ENCODE measurements at regions of chr1 and their contacts with region 1.

Region 1: DNA sequence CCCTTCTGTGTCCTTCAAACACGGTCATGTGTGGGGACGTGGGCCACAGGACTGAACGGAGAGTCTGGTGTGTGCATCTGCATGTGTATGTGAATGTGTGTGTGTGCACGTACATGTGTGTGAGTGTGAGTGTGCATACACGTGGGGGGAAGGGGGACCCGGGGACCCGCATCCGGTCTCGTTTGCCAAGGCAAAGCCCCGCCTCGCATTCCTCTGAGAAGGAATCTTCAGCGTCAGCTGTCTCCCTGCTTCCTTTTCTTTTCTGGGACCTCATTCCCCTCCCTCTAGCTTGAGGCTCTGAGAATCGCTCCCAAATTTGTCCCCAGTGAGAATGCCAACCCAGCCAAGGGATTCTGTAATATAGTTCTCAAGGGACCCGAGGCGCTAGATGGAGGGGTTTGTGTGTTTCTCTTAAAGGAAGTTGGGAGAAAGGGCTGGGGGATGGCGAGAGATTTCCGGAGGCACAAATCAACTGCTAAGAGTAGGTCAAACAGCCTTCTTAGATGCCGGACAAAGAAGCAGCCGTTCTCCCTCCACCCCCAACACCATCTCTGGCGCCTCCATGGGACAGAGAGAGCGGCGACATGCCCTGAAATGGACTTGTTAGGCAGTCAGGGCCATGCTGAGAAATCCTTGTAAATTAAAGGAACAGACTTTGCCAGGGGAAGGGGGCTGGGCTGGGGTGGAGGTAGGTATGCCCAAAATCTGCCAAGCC is 6.6 kb downstream of the IFFO2 start:
- DNase-seq: no peak

Region 2: DNA sequence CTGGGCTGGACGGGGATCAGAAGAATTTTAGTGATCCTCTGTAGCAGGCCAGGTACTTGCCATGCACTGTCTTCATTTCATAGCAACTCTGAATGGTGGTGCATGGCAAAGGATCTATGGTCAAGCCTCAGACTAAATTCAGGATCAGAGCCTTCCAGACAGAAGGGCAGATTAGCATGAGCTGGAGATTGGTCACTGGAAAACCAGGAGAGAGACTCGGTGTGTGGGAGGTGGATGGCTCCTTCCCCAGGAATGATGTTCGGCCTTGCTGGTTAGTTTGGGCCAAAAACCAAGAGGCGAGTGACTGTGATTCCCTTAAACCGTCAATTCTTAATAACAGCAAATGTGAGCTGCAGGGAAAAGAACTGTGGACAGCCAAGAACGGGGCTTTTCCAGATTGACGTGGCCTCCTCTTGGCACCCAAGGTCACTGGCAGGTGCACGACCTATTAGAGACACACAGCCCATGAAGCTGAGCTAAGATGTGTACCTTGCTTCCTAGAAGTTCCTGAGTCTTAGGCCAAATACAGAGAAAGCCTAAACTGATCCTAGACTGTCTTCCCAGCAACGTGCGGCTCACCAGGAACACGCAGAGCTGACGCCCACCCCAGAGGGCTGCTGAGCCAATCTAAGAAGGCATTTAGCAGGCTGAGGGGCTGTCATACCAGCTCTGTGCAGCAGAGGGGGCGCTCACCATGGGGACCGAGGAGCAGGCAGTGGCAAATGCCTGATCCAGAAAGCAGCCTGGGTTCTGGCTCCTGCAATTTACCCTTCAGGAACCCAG is 66.0 kb before region 1 on chr1:
- intact Hi-C with region 1: no loop called
- DNase-seq: no peak

Region 3: GRCh38 chr1:18913065-18913835 is 36.6 kb before region 1 on chr1:
- intact Hi-C with region 1: loop called (anchors 5 kb)
- DNase-seq: peak; percentile 92

Region 4: GRCh38 chr1:18926315-18927081 is 23.3 kb before region 1 on chr1:
- intact Hi-C with region 1: loop called (anchors 2 kb)
- DNase-seq: peak; percentile 85

Region 5: DNA sequence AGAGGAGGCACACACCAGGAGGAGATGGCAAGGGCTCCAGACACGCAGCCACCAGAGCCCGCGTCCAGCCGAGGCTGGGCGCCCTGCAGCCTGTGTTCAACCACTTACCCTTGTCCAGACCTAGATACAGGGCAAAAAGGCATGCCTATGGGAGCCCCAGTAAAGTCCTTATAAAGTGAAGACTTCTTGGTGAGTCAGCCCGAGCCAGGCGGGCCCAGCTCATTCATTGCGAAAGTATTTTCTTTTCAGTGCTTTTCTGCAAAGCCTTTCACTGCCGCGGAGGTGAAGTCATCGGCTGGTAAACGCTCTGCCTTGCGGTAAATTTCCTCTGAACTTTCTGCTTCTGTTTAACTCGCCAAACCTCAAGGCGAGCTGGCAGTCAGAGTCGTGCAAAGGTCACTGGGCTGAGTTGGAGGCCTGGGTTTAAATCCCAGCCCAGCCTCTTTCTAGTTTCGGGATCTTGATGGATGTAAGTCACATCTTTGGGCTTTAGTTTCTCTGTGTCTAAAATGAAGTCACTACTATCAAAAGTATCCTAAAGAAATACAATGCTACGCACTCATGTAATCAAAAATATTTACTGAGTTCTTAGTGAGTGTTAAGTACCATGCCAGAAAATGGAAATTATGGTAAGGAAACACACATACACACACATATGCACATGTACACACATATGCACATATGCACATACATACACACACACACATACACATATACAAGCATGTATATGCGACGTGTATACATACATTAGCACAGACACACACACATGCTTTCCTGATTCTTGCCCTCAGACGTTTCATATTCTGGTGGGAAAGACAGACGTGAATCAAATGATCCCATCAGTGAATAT is 61.4 kb after region 1 on chr1:
- intact Hi-C with region 1: no loop called
- DNase-seq: no peak

Region 6: GRCh38 chr1:19081218-19081893 is 131.5 kb after region 1 on chr1:
- intact Hi-C with region 1: loop called (anchors 5 kb)
- DNase-seq: no peak

Measured in cardiac septum (tissue), 1 donor.